Motor neuron (in vitro differentiated cells): ENCODE measurements at regions of chr10 and their contacts with region 1.

Region 1: DNA sequence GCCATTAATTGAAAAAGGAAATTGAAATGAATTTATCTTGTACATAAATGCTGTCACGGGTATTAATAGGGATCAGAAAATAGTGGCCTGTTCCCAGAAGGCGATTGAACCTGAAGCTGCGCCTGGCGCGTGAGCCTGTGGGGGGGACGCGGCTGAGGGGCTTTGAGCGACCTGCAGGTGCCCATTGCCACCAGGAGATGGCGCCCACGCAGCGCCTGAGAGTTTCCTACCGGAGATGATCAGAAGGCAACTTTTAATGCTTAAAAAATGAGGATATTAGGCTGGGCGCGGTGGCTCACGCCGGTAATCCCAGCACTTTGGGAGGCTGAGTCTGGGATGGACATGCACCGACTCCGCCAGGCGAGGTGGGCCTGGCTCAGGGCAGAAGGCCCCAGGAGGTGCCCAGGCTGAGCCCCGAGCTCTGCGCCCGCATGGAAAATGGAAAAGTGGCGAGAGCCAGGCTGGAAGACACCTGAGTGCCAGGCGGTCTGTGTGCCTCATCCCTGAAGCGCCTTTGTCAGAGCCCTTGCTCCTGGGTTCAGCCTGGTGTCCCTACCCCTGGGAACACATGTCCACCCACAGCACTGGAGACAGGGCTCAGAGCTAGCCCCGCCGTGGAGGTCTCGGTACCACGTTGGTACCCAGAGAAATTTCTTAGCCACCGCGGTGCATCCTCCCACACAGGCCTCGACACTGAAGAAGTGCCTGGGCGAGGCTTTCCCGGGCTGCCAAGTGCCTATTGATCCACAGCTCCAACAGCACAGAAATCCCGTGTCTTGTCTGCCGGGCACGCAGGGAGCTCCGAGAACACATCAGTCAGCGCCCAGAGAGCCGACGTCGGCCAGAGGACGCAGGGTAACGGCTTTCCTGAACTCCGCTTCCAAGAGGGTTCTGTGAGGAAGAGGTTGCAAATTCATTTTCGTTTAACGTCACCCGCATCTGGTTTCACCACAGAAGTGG is 117.4 kb downstream of the INPP5A start:
- ATAC-seq: peak; percentile 56 to 95 (median 70)
- H3K4me3 ChIP-seq: no peak overlapping the region
- H3K27ac ChIP-seq: no peak overlapping the region
- H3K4me1 ChIP-seq: peaks cover 16% of the 10 kb centered on the region in 2 donors

Region 2: GRCh38 chr10:132774902-132775747 is 120.1 kb after region 1 on chr10:
- in situ Hi-C with region 1: loop called in 2 of 9 experiments (anchors 25 kb)
- ATAC-seq: peak in 3 of 8 experiments; percentile 17 to 28 (median 17)
- H3K4me3 ChIP-seq: no peak overlapping the region
- H3K27ac ChIP-seq: no peak overlapping the region
- H3K4me1 ChIP-seq: peaks cover 3 to 4% of the 10 kb centered on the region in 2 donors

Region 3: DNA sequence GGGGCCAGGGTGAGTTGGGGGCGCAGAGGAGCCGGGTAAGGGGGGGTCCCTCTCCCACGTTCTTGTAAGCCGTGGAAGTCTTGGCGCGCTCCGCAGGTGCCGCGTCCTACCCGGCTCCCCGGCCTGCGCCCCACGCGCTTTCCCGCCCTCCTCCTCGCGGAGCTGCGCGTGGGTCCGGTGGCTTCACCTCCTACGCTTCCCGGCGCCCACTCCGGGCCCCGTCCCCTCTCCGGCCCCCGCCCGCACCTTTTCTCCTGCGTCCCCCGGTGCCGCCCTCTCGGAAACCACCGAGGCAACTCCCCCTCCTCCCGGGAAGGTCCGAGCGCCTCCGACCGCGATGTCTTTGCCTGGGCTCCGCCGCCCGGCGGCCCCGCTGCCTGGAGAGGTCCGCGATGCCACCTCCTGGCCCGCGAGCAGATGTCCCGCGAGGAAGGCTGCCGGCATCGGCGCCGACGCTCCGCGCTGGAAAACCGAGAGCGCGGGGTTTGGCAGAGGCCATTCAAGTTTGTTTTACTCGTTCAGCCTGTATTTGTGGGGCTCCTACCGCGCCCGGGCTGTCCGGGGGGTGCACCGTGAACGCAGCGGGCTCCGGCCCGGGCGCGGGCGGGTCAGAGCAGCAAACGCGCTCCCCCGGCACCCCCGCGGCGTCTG is 133.3 kb after region 1 on chr10:
- in situ Hi-C with region 1: loop called in 1 of 9 experiments (anchors 25 kb)
- ATAC-seq: peak; percentile 12 to 60 (median 47)
- H3K4me3 ChIP-seq: peak overlapping the region in 3 of 5 donors; percentile 14 to 24 (median 14)
- H3K27ac ChIP-seq: no peak overlapping the region
- H3K4me1 ChIP-seq: peaks cover 18 to 49% of the 10 kb centered on the region in 2 donors

Region 4: DNA sequence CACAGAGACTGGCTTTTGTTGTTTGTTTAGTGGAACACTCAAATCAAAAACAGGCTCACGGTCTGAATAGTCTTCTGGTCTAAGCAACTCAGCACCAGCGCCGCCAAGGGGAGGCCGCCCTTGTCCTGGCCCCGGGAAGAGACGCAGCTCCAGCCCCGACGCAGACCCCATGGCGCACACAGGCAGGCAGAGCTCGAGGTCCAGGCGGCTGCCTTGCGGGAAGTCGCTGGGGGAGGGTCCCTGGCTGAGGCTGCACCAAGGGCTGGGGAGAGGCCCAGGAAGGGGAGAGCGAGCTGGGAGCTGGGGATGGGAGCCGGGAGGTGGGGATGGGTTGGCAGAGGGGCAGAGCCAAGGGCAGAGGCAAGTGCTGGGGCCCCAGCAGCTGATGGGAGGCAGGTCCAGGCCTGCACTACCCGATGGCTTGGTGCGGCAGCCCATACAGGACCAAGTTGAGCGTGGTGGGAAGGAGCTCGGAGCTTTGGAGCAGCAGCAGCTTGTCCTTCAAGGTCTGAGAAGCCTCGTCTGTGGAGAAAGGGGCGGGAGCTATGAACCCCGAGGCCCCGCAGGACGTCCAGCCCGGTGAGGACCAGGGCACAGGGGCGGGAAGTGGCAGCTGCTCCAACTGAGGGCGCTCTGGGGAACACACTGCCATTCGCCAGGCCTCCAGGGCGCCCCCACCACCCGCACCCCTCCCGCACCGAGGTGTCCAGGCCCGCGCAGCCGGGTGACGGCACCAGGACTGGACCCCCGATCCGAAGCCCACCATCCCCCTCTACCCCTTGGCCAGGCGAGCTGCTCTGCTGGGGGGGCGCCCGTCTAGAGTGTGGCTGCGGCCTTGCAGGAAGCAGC is 153.6 kb after region 1 on chr10:
- in situ Hi-C with region 1: no loop called
- ATAC-seq: peak in 5 of 8 experiments; percentile 52 to 79 (median 74)
- H3K4me3 ChIP-seq: no peak overlapping the region
- H3K27ac ChIP-seq: peak overlapping the region in 1 of 2 donors; percentile 0
- H3K4me1 ChIP-seq: peaks cover 32 to 38% of the 10 kb centered on the region in 2 donors